ENCODE measurements at regions of chr2 and their contacts with region 1.

Region 1: DNA sequence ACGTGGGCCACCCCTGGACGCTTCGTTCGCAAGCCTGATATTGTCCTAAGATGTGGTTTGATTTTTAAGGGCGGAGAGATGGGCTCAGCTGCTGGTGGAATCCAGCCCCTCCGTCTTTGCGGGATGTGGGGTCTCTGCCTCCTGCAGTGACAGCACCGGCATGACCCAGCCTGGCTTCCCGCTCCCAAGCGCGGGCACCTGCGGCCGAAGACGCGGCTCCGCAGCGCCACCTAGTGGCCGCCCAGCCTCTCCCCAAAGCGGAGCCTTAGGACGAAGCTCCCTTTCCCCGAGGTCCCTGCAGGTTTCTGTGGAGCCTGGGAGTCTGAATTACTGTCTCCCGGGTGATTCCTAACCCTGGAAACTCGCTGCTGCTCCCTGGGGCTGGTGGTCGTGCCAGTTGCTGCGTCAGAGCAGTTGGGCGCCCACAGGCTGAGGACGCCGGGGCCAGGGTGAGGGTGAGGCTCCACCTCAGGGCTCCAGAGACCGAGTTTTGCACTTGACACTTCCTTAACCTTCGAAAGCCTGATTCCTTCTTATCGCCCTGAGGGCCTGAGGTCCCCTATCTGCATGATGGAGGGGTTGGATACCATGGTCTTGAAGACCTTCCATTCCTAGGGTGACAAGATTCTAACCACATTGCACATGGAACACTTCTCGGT is 137.5 kb downstream of the TPO start:
- DNase-seq: peak; percentile 28 to 80 (median 66)
- ATAC-seq: peak; percentile 70
- H3K4me3 ChIP-seq: peak overlapping the region; percentile 34
- H3K4me3 Mint-ChIP-seq: peak overlapping the region in 6 of 10 donors; percentile 25 to 73 (median 42)
- H3K27ac ChIP-seq: no peak overlapping the region
- H3K27ac Mint-ChIP-seq: no peak overlapping the region
- H3K4me1 ChIP-seq: peaks cover 0 to 2% of the 10 kb centered on the region in 2 donors
- H3K4me1 Mint-ChIP-seq: peaks cover 5 to 20% (median 7%) of the 10 kb centered on the region in 7 donors
- H3K27me3 ChIP-seq: no peaks in the 10 kb centered on the region
- H3K27me3 Mint-ChIP-seq: no peaks in the 10 kb centered on the region

Region 2: DNA sequence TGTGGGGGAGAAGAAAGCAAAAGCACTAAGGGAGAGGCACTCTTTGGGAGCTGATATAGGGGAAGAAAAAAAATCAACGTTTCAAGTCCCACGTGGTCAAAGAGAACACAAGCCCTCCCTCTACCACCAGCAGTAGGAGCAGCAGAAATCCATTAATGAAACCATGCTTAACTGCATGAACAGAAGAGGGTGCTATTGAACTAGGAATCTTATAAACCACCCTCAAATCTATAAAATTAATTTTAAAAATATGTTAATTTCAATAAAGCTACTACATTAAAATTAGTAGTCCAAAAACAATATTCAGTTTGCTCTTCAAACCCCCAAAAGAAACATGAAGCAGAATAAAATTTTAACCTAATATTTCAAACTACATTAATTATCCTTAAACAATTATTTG is 1021.4 kb before region 1 on chr2:
- CTCF ChIA-PET with region 1: no interaction called
- POLR2A ChIA-PET with region 1: no interaction called
- intact Hi-C with region 1: loop called in 1 of 2 experiments (anchors 10 kb)
- DNase-seq: peak in 7 of 9 donors; percentile 2 to 39 (median 21)
- ATAC-seq: peak; percentile 65
- H3K4me3 ChIP-seq: no peak overlapping the region
- H3K4me3 Mint-ChIP-seq: no peak overlapping the region
- H3K27ac ChIP-seq: no peak overlapping the region
- H3K27ac Mint-ChIP-seq: no peak overlapping the region
- H3K4me1 ChIP-seq: no peaks in the 10 kb centered on the region
- H3K4me1 Mint-ChIP-seq: no peaks in the 10 kb centered on the region
- H3K27me3 ChIP-seq: no peaks in the 10 kb centered on the region
- H3K27me3 Mint-ChIP-seq: peaks cover 6 to 26% (median 8%) of the 10 kb centered on the region in 5 donors

Region 3: GRCh38 chr2:714005-714741 is 836.6 kb before region 1 on chr2:
- CTCF ChIA-PET with region 1: interaction called, 3 read pairs
- POLR2A ChIA-PET with region 1: no interaction called
- intact Hi-C with region 1: loop called (anchors 1 to 2 kb)
- DNase-seq: peak in 2 of 9 donors; percentile 4 to 35
- ATAC-seq: peak; percentile 74
- H3K4me3 ChIP-seq: no peak overlapping the region
- H3K4me3 Mint-ChIP-seq: no peak overlapping the region
- H3K27ac ChIP-seq: no peak overlapping the region
- H3K27ac Mint-ChIP-seq: no peak overlapping the region
- H3K4me1 ChIP-seq: no peaks in the 10 kb centered on the region
- H3K4me1 Mint-ChIP-seq: peaks cover 0 to 5% (median 0%) of the 10 kb centered on the region in 7 donors
- H3K27me3 ChIP-seq: no peaks in the 10 kb centered on the region
- H3K27me3 Mint-ChIP-seq: peaks cover 20 to 30% (median 22%) of the 10 kb centered on the region in 5 donors

Region 4: DNA sequence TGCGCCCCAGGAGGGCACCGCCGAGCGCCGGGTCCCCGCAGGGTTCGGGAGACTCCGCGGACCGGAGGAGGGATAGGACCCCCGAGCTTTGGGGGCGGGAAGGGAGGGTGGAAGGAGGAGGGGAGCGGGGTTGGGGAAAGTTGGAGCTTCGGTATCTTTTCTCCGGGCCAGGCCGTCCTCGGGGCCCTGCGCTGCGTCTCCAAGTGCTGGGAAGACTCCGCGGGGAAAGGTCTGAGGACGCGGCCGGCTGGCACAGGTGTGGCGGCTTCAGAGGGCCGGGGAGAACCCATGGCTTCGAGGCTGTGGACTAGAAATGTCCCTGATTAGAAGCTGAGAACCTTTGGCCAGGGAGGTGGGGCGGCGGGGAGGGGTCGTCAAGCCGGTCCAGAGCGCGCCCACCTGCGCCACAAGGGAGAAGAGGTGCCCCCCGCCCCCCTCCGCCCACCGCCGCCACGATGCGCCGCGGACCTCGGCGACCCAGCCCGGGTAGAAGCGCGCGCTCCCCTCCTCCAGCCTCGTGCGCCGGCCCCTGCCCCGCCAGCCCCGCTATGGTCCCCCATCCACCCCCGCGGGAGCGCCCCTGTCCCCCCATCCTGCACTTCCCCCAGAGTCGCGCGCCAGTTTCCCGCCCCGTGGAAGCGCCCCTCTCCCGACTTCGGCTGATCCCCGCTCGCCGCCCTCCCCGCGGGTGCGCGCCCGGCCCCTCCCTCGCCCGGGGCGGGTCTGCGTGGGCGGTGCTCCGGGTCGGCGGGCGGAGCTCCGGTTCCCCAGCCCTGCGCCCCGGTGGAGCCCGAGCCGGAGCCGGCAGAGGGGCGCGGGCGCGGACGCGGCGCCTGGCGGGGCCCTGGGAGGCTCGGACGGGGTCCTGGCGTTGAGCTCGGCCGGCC is 600.5 kb before region 1 on chr2 and contains the start of gene SNTG2:
- CTCF ChIA-PET with region 1: no interaction called
- POLR2A ChIA-PET with region 1: no interaction called
- intact Hi-C with region 1: loop called (anchors 1 to 10 kb)
- DNase-seq: peak; percentile 11 to 75 (median 53)
- ATAC-seq: peak; percentile 91
- H3K4me3 ChIP-seq: no peak within 1 kb of the TSS
- H3K4me3 Mint-ChIP-seq: peak within 1 kb of the TSS; percentile 68 to 89 (median 84)
- H3K27ac ChIP-seq: no peak within 1 kb of the TSS
- H3K27ac Mint-ChIP-seq: peak within 1 kb of the TSS in 3 of 9 donors; percentile 45 to 75 (median 62)
- H3K4me1 ChIP-seq: peaks cover 0 to 6% of the 10 kb centered on the region in 2 donors
- H3K4me1 Mint-ChIP-seq: peaks cover 13 to 38% (median 26%) of the 10 kb centered on the region in 7 donors
- H3K27me3 ChIP-seq: peaks cover 0 to 5% of the 10 kb centered on the region in 2 donors
- H3K27me3 Mint-ChIP-seq: peaks cover 26 to 48% (median 40%) of the 10 kb centered on the region in 5 donors
- total RNA-seq, gene SNTG2: 2.5 to 4.9 (median 3.6) TPM in 4 of 5 experiments, not detected in the other

Region 5: GRCh38 chr2:1246239-1246638 is 304.5 kb before region 1 on chr2:
- CTCF ChIA-PET with region 1: no interaction called
- POLR2A ChIA-PET with region 1: no interaction called
- intact Hi-C with region 1: loop called in 1 of 2 experiments (anchors 10 kb)
- DNase-seq: no peak
- ATAC-seq: no peak
- H3K4me3 ChIP-seq: no peak overlapping the region
- H3K4me3 Mint-ChIP-seq: no peak overlapping the region
- H3K27ac ChIP-seq: no peak overlapping the region
- H3K27ac Mint-ChIP-seq: no peak overlapping the region
- H3K4me1 ChIP-seq: no peaks in the 10 kb centered on the region
- H3K4me1 Mint-ChIP-seq: peaks cover 3 to 16% (median 7%) of the 10 kb centered on the region in 7 donors
- H3K27me3 ChIP-seq: no peaks in the 10 kb centered on the region
- H3K27me3 Mint-ChIP-seq: peaks cover 0 to 12% (median 5%) of the 10 kb centered on the region in 5 donors

Measured in naive thymus-derived CD4-positive, alpha-beta T cell (primary cell).